ENCODE measurements at regions of chr1 and their contacts with region 1.

Region 1: DNA sequence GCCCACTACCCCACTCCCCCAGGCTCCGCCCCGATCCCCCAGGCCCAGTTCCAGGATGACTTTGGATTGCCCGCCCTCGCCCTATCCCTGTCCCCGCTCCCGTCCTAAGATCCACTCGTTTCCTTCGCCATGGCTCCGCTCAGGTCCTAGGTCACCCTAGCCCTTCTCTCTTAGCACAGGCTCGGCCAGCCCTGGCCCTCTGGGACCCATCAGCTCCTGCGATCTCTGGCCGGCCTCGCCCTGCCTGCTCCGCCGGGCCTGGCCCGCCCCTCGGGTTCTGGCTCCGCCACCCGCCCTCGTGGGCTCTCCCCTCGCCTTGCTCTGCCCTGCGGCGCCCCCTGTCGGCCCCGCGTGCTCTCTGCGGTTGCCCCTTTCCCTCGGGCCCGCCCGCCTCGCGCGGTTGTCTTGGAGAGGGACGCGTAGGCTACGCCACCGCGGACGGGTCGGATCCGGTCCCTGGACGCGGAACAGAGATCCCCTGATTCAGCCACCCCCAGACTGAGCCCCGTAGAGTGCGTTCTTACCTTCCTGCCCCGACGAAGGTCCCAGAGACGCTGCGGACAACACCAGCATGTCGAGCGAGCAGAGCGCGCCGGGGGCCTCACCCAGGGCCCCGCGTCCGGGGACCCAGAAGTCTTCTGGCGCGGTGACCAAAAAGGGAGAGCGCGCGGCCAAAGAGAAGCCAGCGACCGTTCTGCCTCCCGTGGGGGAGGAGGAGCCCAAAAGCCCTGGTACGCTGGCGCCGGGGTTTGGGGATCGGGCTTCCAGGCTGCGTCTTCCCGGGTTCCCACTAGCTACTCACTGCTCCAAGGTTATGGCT is at the start of gene LRRC71:
- DNase-seq: peak; percentile 84 to 91 (median 87)
- ATAC-seq: peak; percentile 79 to 94 (median 94)
- H3K4me3 ChIP-seq: peak within 1 kb of the TSS in 8 of 12 donors; percentile 6 to 30 (median 27)
- H3K27ac ChIP-seq: no peak within 1 kb of the TSS
- H3K4me1 ChIP-seq: peaks cover 4 to 26% (median 20%) of the 10 kb centered on the region in 12 donors
- H3K27me3 ChIP-seq: peaks cover 12 to 61% (median 49%) of the 10 kb centered on the region in 9 donors
- CTCF ChIP-seq: peak; percentile 82 to 98 (median 94)
- POLR2A ChIP-seq: no peak
- total RNA-seq, gene LRRC71: 0.27 TPM in 1 of 9 donors, not detected in the others

Region 2: GRCh38 chr1:156833603-156834002 is 86.8 kb before region 1 on chr1:
- intact Hi-C with region 1: loop called in 4 of 10 experiments (anchors 5 to 10 kb)
- DNase-seq: peak in 1 of 5 donors; percentile 42
- ATAC-seq: peak in 2 of 4 donors; percentile 45 to 49
- H3K4me3 ChIP-seq: no peak overlapping the region
- H3K27ac ChIP-seq: no peak overlapping the region
- H3K4me1 ChIP-seq: peaks cover 0 to 5% (median 0%) of the 10 kb centered on the region in 12 donors
- H3K27me3 ChIP-seq: peaks cover 0 to 14% (median 2%) of the 10 kb centered on the region in 9 donors
- CTCF ChIP-seq: no peak
- POLR2A ChIP-seq: no peak

Region 3: GRCh38 chr1:156892190-156893047 is 28.0 kb before region 1 on chr1:
- intact Hi-C with region 1: loop called in 9 of 10 experiments (anchors 1 to 5 kb)
- DNase-seq: peak; percentile 94 to 96 (median 94)
- ATAC-seq: peak; percentile 80 to 90 (median 86)
- H3K4me3 ChIP-seq: peak overlapping the region in 10 of 12 donors; percentile 18 to 91 (median 72)
- H3K27ac ChIP-seq: peak overlapping the region; percentile 80 to 99 (median 93)
- H3K4me1 ChIP-seq: peaks cover 0 to 55% (median 38%) of the 10 kb centered on the region in 12 donors
- H3K27me3 ChIP-seq: peaks cover 0 to 28% (median 4%) of the 10 kb centered on the region in 9 donors
- CTCF ChIP-seq: peak; percentile 81 to 97 (median 88)
- POLR2A ChIP-seq: no peak

Region 4: DNA sequence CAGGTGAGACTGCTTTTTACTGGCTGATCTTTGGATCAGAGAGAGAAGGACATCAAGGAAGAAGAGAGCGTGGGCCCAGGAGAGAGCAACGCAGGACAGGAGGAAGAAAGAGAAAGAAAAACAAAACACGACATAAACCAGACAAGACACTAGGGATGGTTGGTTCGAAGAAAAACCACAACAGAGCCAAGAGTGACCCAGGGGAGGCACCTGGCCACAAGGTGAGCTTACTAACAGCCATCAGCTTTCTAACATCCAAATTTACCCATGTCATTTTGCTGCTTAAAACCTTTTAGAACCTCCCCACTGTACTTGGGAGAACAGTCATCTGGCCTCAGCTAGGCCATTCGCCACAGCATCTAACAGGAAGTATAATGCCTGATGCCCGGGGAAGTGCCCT is 67.3 kb after region 1 on chr1:
- intact Hi-C with region 1: no loop called
- DNase-seq: no peak
- ATAC-seq: no peak
- H3K4me3 ChIP-seq: no peak overlapping the region
- H3K27ac ChIP-seq: no peak overlapping the region
- H3K4me1 ChIP-seq: no peaks in the 10 kb centered on the region
- H3K27me3 ChIP-seq: no peaks in the 10 kb centered on the region
- CTCF ChIP-seq: no peak
- POLR2A ChIP-seq: no peak

Measured in heart left ventricle (tissue), 16 donors.